Lower leg skin (tissue), 4 donors: ENCODE measurements at regions of chr9 and their contacts with region 1.

Region 1: DNA sequence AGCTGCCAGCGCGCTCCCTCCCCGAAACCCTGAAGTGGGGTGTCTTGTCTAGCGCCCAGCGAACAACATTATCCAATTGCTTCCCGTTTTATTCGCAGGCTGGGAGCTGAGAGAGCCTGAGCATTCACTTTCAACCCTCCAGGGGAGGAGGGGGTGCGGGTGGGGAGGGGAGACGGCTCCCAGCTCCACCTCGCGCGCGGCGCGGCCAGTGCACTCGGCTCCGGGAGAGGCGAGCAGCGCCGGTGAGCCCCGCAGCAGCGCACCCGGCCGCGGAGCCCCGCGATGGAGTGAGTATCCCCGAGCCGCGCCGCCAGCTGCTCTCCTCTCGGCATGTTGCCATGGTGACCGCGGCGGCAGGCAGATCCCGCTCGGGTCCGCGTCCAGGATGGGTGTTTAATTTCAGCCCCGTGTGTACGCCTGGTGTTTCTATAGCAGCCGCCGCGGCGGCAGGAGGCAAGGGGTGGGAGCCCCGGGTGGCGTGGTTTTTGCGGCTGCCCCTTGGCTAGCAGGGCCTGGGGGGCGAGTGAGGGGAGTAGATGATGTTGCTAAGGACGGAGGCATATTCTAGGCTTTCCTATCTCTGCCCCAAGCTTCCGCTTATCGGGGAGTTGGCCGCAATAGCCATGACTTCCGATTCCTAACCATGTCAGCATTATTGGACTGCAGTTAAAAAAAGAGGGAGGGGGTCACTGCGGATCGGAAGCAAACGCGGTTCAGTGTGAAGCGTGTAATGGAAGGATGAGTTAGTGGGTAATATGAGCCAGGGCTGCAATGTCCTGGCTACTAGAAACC is 139.2 kb upstream of the PALM2AKAP2 start:
- DNase-seq: peak in 1 of 2 donors; percentile 84
- H3K4me3 ChIP-seq: peak overlapping the region; percentile 6
- CTCF ChIP-seq: no peak
- POLR2A ChIP-seq: no peak

Region 2: GRCh38 chr9:109627041-109627440 is 13.7 kb before region 1 on chr9:
- intact Hi-C with region 1: loop called (anchors 2 kb)
- DNase-seq: no peak
- H3K4me3 ChIP-seq: no peak overlapping the region
- CTCF ChIP-seq: no peak
- POLR2A ChIP-seq: no peak

Region 3: DNA sequence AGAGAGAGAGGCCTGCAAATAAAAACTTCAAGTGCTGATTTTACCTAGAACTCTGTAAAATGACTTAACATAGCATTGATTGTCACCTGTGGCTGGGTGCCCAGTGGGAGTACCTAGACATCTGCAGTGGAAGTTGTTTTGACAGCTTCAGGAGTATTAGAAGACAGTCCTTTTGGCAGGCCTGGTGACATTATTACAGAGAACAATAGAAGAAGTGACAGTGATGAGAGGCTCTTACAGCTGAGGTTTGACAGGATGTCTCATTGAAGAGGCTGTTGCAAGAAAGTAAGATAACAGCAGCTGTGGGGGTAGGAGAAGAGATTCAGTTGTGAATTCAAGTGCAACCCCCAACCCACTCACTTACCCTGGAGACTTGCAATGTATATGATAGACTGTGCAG is 1000.0 kb after region 1 on chr9:
- intact Hi-C with region 1: no loop called
- DNase-seq: no peak
- H3K4me3 ChIP-seq: no peak overlapping the region
- CTCF ChIP-seq: no peak
- POLR2A ChIP-seq: no peak

Region 4: GRCh38 chr9:111161015-111161415 is 1520.2 kb after region 1 on chr9:
- intact Hi-C with region 1: no loop called
- DNase-seq: no peak
- H3K4me3 ChIP-seq: no peak overlapping the region
- CTCF ChIP-seq: no peak
- POLR2A ChIP-seq: no peak